Activated CD4-positive, alpha-beta memory T cell treated with anti-CD3 and anti-CD28 coated beads for 36 hours (primary cell): ENCODE measurements at regions of chr13 and their contacts with region 1.

Region 1: GRCh38 chr13:26985285-26985878 is 186.2 kb downstream of the USP12 start:
- DNase-seq: peak; percentile 79
- H3K4me3 Mint-ChIP-seq: no peak overlapping the region
- H3K27ac Mint-ChIP-seq: no peak overlapping the region
- H3K4me1 Mint-ChIP-seq: no peaks in the 10 kb centered on the region
- H3K27me3 Mint-ChIP-seq: peaks cover 9% of the 10 kb centered on the region

Region 2: GRCh38 chr13:26946684-26947343 is 38.6 kb before region 1 on chr13:
- CTCF ChIA-PET with region 1: interaction called, 14 read pairs
- POLR2A ChIA-PET with region 1: no interaction called
- intact Hi-C with region 1: no loop called
- DNase-seq: no peak
- H3K4me3 Mint-ChIP-seq: no peak overlapping the region
- H3K27ac Mint-ChIP-seq: no peak overlapping the region
- H3K4me1 Mint-ChIP-seq: no peaks in the 10 kb centered on the region
- H3K27me3 Mint-ChIP-seq: peaks cover 8% of the 10 kb centered on the region

Region 3: DNA sequence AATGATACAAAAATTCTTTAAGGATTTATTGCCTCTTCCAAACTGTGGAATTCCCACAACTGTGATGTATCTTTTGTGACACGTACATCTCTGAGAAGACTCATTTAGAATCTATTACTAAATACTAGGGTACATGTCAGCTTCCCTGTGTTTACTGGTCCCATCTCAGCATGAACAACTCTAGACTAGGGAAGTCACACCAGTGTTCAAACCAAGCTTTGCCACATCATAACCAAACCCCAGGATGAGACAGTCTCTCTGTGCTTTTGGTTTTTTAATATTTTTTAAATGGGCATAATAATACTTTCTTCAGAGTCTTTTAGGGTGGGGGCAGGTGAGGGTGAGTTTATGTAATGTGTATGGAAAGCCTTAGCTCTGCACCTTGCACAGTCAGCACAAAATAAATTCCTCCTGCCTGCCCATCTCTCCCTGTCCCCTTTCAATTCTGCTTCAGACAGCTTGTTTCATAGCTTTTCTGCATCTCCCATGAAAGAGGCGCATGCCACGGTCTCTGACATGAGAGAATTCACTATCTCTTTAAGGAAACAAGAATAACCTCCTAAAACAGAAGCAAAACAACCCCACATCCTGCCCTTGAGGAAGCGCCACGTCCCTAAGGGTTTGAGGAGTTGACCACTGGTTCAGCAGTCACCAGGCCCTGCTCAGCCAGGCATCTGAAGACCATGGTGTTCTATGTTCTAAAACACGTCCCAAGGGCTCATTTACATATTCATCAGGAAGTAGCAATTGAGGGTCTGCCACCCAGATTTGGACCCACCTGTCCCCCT is 11.8 kb after region 1 on chr13:
- CTCF ChIA-PET with region 1: interaction called, 10 read pairs
- POLR2A ChIA-PET with region 1: no interaction called
- intact Hi-C with region 1: no loop called
- DNase-seq: peak; percentile 48
- H3K4me3 Mint-ChIP-seq: no peak overlapping the region
- H3K27ac Mint-ChIP-seq: peak overlapping the region; percentile 14
- H3K4me1 Mint-ChIP-seq: peaks cover 8% of the 10 kb centered on the region
- H3K27me3 Mint-ChIP-seq: peaks cover 31% of the 10 kb centered on the region

Region 4: GRCh38 chr13:27283906-27284493 is 298.6 kb after region 1 on chr13:
- CTCF ChIA-PET with region 1: interaction called, 23 read pairs
- POLR2A ChIA-PET with region 1: interaction called, 6 read pairs
- intact Hi-C with region 1: loop called (anchors 1 kb)
- DNase-seq: peak; percentile 51
- H3K4me3 Mint-ChIP-seq: no peak overlapping the region
- H3K27ac Mint-ChIP-seq: no peak overlapping the region
- H3K4me1 Mint-ChIP-seq: no peaks in the 10 kb centered on the region
- H3K27me3 Mint-ChIP-seq: no peaks in the 10 kb centered on the region

Region 5: DNA sequence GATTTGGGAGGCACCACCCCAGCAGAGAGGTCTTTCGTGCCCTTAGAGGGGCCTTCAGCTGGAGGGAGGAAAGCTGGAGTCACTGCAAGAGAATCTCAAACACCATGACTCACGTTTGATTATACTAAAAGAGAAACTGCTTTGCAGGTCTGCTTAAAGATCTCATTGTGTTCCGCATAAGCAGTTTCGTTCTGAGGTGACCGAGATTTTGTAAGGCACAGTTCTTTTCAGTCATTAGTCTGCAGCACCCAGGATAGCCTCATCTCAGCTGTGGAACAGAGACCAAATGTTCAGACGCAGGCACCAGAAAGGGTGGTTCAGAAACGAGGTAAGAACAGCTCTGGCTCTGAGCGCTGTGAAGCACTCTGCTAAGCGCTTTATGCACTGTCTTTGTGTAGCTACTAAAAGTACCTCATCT is 367.8 kb after region 1 on chr13:
- CTCF ChIA-PET with region 1: interaction called, 211 read pairs
- POLR2A ChIA-PET with region 1: no interaction called
- intact Hi-C with region 1: no loop called
- DNase-seq: peak; percentile 79
- H3K4me3 Mint-ChIP-seq: peak overlapping the region; percentile 45
- H3K27ac Mint-ChIP-seq: peak overlapping the region; percentile 82
- H3K4me1 Mint-ChIP-seq: peaks cover 19% of the 10 kb centered on the region
- H3K27me3 Mint-ChIP-seq: peaks cover 12% of the 10 kb centered on the region

Region 6: DNA sequence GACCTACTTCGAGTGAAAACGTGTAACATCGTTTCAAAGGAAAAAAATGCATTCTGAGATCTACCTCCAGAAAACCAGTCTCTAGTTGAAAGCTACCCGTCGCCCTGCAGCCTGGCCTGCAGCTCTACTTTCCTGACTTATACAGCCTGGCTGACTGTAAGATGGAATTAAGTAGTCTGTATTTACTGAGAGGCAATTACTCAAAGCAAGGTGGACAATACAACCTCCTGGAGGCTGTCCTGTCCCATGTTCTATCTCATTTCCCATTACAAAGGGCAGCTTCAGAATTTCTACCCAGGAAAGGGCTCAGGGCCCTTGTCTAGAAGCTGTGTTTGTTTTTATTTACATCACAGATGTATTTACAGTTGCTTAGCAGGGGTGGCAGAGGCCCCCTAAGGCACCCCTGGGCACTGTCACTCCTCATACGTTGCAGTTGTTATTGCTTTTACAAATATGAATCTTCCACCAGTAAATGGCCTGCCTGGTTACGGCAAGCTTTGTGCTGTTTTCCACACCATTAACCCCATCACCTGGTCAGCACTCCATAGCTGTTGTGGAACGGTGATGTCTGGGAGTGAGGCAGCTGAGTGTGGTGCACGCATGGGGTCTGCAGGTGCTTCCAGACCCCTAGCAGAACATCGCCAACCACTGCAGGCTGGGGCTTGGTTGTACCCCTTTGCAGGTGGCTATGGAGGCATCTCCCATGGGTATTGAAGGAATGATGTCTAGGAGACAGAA is 511.3 kb after region 1 on chr13:
- CTCF ChIA-PET with region 1: no interaction called
- POLR2A ChIA-PET with region 1: no interaction called
- intact Hi-C with region 1: no loop called
- DNase-seq: no peak
- H3K4me3 Mint-ChIP-seq: no peak overlapping the region
- H3K27ac Mint-ChIP-seq: no peak overlapping the region
- H3K4me1 Mint-ChIP-seq: no peaks in the 10 kb centered on the region
- H3K27me3 Mint-ChIP-seq: no peaks in the 10 kb centered on the region